HepG2 (cell line): ENCODE measurements at regions of chr20 and their contacts with region 1.

Region 1: GRCh38 chr20:45362804-45363610 is at the start of gene SYS1:
- DNase-seq: peak; percentile 100
- ATAC-seq: peak; percentile 89
- H3K4me3 ChIP-seq: peak within 1 kb of the TSS; percentile 78 to 95 (median 91)
- H3K27ac ChIP-seq: peak within 1 kb of the TSS; percentile 92
- H3K4me1 ChIP-seq: peaks cover 64% of the 10 kb centered on the region
- H3K27me3 ChIP-seq: no peaks in the 10 kb centered on the region; a peak in 2 of 5 replicates
- CTCF ChIP-seq: peak; percentile 99
- EP300 ChIP-seq: peak; percentile 8 to 29; a peak in 3 of 4 replicates
- POLR2A ChIP-seq: peak; percentile 94 to 98
- RAD21 ChIP-seq: peak; percentile 89
- total RNA-seq, gene SYS1: 22.0 and 38.3 TPM in 2 replicates

Region 2: GRCh38 chr20:45337367-45338120 is 25.5 kb before region 1 on chr20:
- CTCF ChIA-PET with region 1: no interaction called
- POLR2A ChIA-PET with region 1: interaction called, 1,422 read pairs
- in situ Hi-C with region 1: no loop called
- intact Hi-C with region 1: loop called (anchors 1 kb)
- DNase-seq: peak; percentile 65
- ATAC-seq: peak; percentile 32
- H3K4me3 ChIP-seq: peak overlapping the region; percentile 31 to 57 (median 32)
- H3K27ac ChIP-seq: peak overlapping the region; percentile 80
- H3K4me1 ChIP-seq: peaks cover 67% of the 10 kb centered on the region
- H3K27me3 ChIP-seq: no peaks in the 10 kb centered on the region
- CTCF ChIP-seq: no peak
- EP300 ChIP-seq: no peak
- POLR2A ChIP-seq: peak in 1 of 2 experiments; percentile 39; a peak in 1 of 4 replicates
- RAD21 ChIP-seq: no peak

Region 3: GRCh38 chr20:45347936-45348778 is 14.8 kb before region 1 on chr20 and contains the start of gene SDC4:
- CTCF ChIA-PET with region 1: no interaction called
- POLR2A ChIA-PET with region 1: interaction called, 1,422 read pairs
- in situ Hi-C with region 1: no loop called
- intact Hi-C with region 1: loop called (anchors 2 kb)
- DNase-seq: no peak
- ATAC-seq: peak; percentile 55
- H3K4me3 ChIP-seq: peak within 1 kb of the TSS; percentile 79 to 87 (median 87)
- H3K27ac ChIP-seq: peak within 1 kb of the TSS; percentile 53
- H3K4me1 ChIP-seq: peaks cover 69% of the 10 kb centered on the region
- H3K27me3 ChIP-seq: peaks cover 1 to 11% of the 10 kb centered on the region in 2 experiments; a peak in 2 of 5 replicates
- CTCF ChIP-seq: no peak
- EP300 ChIP-seq: no peak
- POLR2A ChIP-seq: peak; percentile 96 to 99
- RAD21 ChIP-seq: peak; percentile 44; the same call in 1 of the 2 replicates
- total RNA-seq, gene SDC4: 36.0 and 65.1 TPM in 2 replicates

Region 4: DNA sequence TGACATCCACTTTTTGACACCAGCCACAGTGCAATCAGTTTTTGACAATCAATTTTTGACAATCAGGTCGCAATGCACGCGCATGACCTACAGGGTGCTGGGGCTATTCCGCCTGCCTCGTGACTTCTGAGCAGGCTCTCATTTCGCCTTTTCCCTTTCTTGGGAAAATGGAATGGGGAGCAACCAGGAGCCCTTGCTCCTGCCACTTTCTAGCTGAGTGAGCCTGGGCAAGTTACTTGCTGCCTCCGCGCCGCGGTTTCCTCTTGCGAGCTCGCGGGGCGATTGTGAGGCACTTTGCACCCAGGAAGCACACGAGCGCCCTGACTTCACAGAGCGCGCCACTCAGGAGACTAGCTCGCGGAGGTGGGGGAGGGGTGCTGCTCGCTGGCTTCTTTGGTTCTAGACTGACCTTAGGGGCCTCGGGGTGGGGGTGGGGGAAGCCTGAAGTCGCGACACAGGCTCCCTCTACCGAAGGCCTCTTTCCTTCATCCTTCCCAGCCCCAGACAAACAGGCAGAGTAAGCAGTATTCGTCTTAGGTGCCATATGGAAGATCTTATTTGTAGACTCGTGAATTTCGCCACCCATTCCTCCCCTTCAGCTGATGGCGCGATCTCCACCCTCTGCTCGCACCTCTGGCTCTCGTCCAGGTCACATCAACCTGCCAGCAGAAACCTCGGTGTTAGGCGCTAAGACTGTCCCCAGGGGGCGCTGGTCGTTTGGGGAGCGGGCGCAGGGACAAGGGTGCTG is 10.5 kb after region 1 on chr20:
- CTCF ChIA-PET with region 1: interaction called, 4 read pairs
- POLR2A ChIA-PET with region 1: interaction called, 51 read pairs
- in situ Hi-C with region 1: no loop called
- intact Hi-C with region 1: no loop called
- DNase-seq: peak; percentile 83
- ATAC-seq: peak; percentile 91
- H3K4me3 ChIP-seq: peak overlapping the region in 2 of 3 experiments; percentile 12 to 29; a peak in 2 of 6 replicates
- H3K27ac ChIP-seq: no peak overlapping the region
- H3K4me1 ChIP-seq: peaks cover 19% of the 10 kb centered on the region
- H3K27me3 ChIP-seq: no peaks in the 10 kb centered on the region
- CTCF ChIP-seq: peak; percentile 98
- EP300 ChIP-seq: no peak
- POLR2A ChIP-seq: no peak
- RAD21 ChIP-seq: peak; percentile 92